Upper lobe of right lung (tissue), 1 donor: ENCODE measurements at regions of chr16 and their contacts with region 1.

Region 1: GRCh38 chr16:27359051-27359450 is 42.9 kb upstream of the IL21R start:
- DNase-seq: no peak
- ATAC-seq: no peak
- H3K4me3 ChIP-seq: no peak overlapping the region
- H3K27ac ChIP-seq: peak overlapping the region; percentile 30
- H3K4me1 ChIP-seq: peaks cover 4% of the 10 kb centered on the region
- H3K27me3 ChIP-seq: no peaks in the 10 kb centered on the region
- CTCF ChIP-seq: no peak

Region 2: GRCh38 chr16:27291106-27291505 is 67.9 kb before region 1 on chr16:
- intact Hi-C with region 1: no loop called
- DNase-seq: no peak
- ATAC-seq: no peak
- H3K4me3 ChIP-seq: no peak overlapping the region
- H3K27ac ChIP-seq: no peak overlapping the region
- H3K4me1 ChIP-seq: peaks cover 11% of the 10 kb centered on the region
- H3K27me3 ChIP-seq: no peaks in the 10 kb centered on the region
- CTCF ChIP-seq: no peak

Region 3: GRCh38 chr16:27304881-27305745 is 53.9 kb before region 1 on chr16:
- intact Hi-C with region 1: no loop called
- DNase-seq: no peak
- ATAC-seq: peak; percentile 82
- H3K4me3 ChIP-seq: no peak overlapping the region
- H3K27ac ChIP-seq: peak overlapping the region; percentile 33
- H3K4me1 ChIP-seq: peaks cover 4% of the 10 kb centered on the region
- H3K27me3 ChIP-seq: no peaks in the 10 kb centered on the region
- CTCF ChIP-seq: no peak

Region 4: DNA sequence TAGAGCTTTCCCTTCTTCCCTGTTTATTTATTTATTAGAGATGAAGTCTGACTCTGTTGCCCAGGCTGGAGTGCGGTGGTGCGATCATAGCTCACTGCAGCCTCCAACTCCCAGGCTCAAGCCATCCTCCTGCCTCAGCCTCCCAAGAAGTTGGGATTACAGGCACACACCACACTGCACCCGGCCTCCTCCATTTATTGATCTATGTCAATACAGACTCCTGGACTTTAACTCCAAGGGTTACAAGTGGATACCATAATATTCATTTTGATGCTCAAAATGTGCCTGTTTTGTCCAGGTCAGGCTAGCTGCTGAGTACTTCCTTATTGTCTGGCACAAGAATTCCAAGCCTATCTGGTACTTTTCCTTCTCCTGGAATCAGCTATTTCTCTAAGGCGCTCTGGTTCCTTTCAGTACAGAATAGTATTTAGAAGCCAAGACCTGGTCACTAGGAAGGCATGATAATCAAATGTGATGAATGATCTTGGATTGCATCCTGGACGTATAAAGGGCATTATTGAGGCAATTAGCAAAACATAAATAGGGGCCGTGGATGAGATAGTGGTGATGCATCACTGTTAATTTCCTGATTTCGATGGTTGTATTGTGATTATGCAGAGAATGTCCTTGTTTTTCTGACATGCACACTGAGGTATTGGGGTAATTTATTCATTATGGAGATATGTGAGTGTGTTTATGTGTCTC is 23.6 kb before region 1 on chr16:
- intact Hi-C with region 1: loop called (anchors 2 kb)
- DNase-seq: no peak
- ATAC-seq: no peak
- H3K4me3 ChIP-seq: no peak overlapping the region
- H3K27ac ChIP-seq: no peak overlapping the region
- H3K4me1 ChIP-seq: peaks cover 38% of the 10 kb centered on the region
- H3K27me3 ChIP-seq: no peaks in the 10 kb centered on the region
- CTCF ChIP-seq: no peak